ENCODE measurements at regions of chr21 and their contacts with region 1.

Region 1: DNA sequence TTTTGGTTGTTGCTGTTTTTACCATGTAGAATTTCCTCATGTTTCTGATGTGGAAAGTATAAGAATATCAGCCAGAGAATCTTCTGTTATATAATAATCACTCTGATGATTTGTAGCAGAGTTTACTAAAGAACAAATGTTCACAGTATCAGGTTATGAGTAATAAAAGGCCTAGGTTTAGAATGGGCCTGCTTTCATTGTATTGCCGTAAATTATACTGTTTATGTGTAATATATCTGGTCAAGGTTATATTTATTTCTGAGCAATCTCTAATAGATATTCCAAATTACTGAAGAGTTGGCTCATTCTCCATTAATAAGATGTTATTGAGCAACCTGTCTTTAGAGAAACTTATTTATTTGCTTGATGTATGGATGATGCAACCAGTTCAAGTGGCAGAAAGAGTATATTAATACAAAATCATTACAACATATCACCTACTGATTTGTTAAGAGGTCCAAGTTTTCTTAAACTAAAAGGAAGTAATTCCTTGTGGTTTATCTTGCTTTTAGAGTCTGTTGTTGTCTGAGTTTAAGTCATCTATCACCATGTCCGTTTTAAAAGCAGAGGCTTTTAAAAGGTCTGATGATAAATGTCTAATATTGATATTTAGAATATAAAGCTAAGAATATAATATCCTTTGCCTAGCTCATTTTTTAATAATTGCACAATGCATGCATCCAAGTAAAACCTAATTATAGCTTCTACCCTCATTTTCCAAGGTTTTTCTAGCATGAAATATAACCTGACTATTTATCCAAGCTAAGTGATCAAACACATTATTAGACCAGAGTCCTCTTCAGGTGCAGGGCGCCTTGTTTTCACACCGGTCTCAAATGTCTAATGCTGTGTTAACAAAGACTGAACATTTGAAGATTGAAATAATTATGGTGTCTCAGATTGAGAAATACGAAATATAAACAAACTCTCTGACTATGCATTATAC is 649.2 kb upstream of the CXADR start:
- DNase-seq: no peak
- ATAC-seq: no peak
- H3K4me3 ChIP-seq: no peak overlapping the region
- H3K4me1 ChIP-seq: no peaks in the 10 kb centered on the region
- CTCF ChIP-seq: no peak

Region 2: DNA sequence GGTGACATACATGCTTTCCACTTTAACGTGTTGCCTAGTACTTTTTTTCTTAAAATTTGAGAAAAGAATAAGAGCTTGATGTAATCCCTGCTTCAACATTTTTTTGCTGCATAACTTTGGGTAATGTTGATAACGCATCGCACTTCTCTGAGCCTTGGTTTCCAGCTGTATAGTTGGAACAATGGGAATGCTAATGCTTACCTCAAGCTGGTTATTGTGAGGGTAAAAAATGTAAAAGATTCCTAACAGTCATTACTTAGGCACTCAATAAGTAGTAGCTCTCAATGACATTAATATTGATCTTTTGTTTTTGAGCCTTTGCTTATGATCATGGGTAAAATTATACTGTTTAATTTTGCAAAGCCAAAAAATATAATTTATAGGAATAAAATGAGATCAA is 34.1 kb before region 1 on chr21:
- intact Hi-C with region 1: loop called in 1 of 2 experiments (anchors 5 kb)
- DNase-seq: no peak
- ATAC-seq: no peak
- H3K4me3 ChIP-seq: no peak overlapping the region
- H3K4me1 ChIP-seq: no peaks in the 10 kb centered on the region
- CTCF ChIP-seq: no peak